Activated CD4-positive, alpha-beta T cell treated with anti-CD3 and anti-CD28 coated beads, Interleukin-2, amount 10 ng/mL, durations not matched to agents 24 days and 14 days (primary cell): ENCODE measurements at regions of chr17 and their contacts with region 1.

Region 1: DNA sequence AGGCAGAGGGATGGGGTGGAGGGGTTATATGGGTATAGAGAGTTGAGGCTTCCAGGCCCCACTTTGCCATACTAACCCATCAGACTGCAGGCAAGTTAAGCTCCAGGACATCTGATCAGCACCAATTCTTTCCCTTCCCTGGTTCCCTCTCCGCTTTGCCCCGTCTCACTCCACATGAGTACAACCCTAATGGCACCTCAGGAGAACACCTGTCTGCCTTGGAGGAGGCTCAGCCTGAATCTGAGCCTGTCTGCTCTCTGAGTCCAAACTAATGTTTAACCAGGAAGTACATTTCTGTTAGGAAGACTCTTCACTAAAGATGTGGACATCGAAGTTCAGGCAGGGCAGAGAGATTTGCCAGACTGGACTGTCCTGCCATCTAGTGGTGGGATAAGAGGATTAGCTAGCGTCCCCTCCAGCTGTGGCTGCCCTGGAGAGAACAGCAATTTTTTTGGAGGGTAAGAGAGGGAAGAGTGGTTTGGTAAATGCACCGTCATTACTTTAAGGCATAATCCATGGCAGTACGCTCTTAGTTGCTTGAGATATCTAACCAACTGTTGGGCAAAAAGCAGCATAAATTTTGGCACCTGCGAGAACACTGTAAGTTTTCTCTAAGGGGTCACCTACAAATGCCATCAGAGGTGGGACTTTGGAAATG is 29.2 kb upstream of the LRRC75A start:
- DNase-seq: peak; percentile 89
- H3K4me3 Mint-ChIP-seq: no peak overlapping the region
- H3K27ac Mint-ChIP-seq: no peak overlapping the region
- H3K4me1 Mint-ChIP-seq: peaks cover 8% of the 10 kb centered on the region
- H3K27me3 Mint-ChIP-seq: peaks cover 30% of the 10 kb centered on the region

Region 2: DNA sequence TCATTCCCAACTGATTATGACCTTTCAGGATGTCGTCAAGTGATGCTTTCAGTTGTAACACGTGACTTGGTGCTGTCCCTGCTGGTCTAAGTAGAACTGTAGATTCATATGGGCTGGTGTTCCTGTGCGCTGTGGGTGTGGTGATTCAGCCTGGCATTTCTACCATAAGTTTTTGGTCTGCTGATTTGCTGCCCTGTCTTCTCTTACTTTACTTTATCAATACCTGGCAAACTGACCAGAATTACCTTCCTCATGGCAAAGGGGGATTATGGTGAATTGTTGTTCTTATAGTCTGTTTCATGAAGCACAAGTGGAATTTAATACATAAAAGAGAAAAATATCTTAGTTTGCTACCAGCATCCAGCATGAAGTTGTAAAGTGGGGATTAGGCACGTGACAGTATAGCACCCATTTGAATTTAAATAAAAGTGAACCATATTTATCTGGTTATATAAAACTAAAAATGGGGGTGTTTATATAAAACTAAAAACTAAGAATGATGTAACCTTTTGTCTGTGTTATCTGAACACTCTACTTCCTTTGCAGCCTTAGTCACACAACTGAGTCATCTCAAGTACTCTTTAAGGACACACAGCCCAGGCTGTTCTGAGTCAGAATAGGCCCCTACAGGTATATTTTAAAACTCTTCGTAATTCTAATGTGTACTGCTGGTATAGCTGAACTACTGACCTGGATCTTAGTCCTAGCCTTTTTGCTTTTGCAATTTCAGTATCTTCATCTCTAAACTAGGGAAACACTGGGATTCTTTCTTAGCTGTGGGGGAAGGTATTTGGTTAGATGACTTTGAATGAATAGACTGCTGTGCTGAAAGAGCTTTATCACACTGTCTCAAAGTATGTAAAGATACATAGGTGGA is 493.3 kb before region 1 on chr17:
- intact Hi-C with region 1: loop called (anchors 10 kb)
- DNase-seq: peak; percentile 78
- H3K4me3 Mint-ChIP-seq: peak overlapping the region; percentile 71
- H3K27ac Mint-ChIP-seq: peak overlapping the region; percentile 93
- H3K4me1 Mint-ChIP-seq: peaks cover 20% of the 10 kb centered on the region
- H3K27me3 Mint-ChIP-seq: no peaks in the 10 kb centered on the region

Region 3: GRCh38 chr17:16363749-16364536 is 157.3 kb before region 1 on chr17:
- intact Hi-C with region 1: loop called (anchors 1 kb)
- DNase-seq: peak; percentile 92
- H3K4me3 Mint-ChIP-seq: no peak overlapping the region
- H3K27ac Mint-ChIP-seq: no peak overlapping the region
- H3K4me1 Mint-ChIP-seq: no peaks in the 10 kb centered on the region
- H3K27me3 Mint-ChIP-seq: no peaks in the 10 kb centered on the region

Region 4: DNA sequence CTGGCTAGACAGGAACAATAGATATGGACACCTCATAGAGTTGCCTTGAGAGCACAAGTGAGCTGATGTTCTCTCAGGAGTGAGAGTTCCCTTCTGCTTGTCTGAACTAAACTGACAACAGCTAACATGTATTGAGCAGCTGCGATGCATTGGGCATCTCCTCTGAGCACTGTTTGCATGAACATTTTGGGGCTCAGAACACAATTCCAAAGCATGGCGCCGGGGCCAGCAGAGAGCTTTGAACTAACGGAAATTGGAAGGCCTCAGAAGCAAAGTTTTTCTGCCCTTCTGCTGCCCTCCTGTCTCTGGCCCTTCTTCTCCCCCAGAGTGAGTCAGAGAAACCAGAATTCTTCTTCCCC is 67.7 kb before region 1 on chr17:
- intact Hi-C with region 1: loop called (anchors 1 kb)
- DNase-seq: no peak
- H3K4me3 Mint-ChIP-seq: no peak overlapping the region
- H3K27ac Mint-ChIP-seq: peak overlapping the region; percentile 56
- H3K4me1 Mint-ChIP-seq: peaks cover 15% of the 10 kb centered on the region
- H3K27me3 Mint-ChIP-seq: no peaks in the 10 kb centered on the region

Region 5: DNA sequence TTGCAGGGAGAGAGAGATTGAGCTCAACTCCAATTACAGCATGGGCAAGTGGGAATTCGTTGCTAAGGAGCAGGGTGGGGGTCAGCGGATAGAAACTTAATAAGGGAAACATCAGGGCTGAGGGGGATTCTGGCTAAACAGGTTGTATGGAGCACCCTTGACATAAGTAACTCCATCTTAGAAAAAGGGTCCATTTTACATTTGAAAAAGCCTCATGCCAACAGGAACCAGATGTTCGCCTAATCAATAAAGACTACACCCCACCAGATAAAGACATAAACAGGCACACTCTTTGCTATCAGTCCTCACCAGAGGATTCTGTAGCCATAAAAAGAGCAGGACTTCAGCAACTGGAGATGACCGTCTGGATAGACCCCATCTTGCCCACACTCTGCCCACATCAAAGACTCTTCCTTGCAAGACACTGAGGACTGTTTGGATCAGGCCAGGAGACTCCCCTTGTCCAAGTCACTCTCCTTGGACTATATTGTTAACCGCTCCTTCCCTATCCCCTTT is 27.6 kb before region 1 on chr17:
- intact Hi-C with region 1: loop called (anchors 2 kb)
- DNase-seq: no peak
- H3K4me3 Mint-ChIP-seq: no peak overlapping the region
- H3K27ac Mint-ChIP-seq: no peak overlapping the region
- H3K4me1 Mint-ChIP-seq: peaks cover 3% of the 10 kb centered on the region
- H3K27me3 Mint-ChIP-seq: peaks cover 58% of the 10 kb centered on the region

Region 6: DNA sequence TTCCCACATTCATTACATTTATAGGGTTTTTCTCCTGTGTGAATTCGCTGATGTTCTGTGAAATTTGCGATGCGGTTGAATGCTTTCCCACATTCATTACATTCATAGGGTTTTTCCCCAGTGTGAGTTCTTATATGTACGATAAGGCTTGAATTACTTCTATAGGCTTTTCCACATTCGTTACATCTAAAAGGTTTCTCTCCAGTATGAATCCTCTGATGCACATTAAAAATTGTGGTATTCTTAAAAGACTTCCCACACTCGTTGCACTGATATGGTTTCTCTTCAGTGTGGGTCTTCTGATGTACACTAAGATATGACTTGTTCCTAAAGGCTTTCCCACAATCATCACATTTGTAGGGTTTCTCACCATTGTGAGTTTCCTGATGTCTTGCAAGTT is 102.1 kb after region 1 on chr17:
- intact Hi-C with region 1: no loop called
- DNase-seq: no peak
- H3K4me3 Mint-ChIP-seq: no peak overlapping the region
- H3K27ac Mint-ChIP-seq: no peak overlapping the region
- H3K4me1 Mint-ChIP-seq: no peaks in the 10 kb centered on the region
- H3K27me3 Mint-ChIP-seq: no peaks in the 10 kb centered on the region

Region 7: GRCh38 chr17:16814439-16814838 is 293.2 kb after region 1 on chr17:
- intact Hi-C with region 1: no loop called
- DNase-seq: no peak
- H3K4me3 Mint-ChIP-seq: no peak overlapping the region
- H3K27ac Mint-ChIP-seq: no peak overlapping the region
- H3K4me1 Mint-ChIP-seq: no peaks in the 10 kb centered on the region
- H3K27me3 Mint-ChIP-seq: no peaks in the 10 kb centered on the region